Thyroid gland (tissue), 4 donors: ENCODE measurements at regions of chr10 and their contacts with region 1.

Region 1: GRCh38 chr10:123559066-123559822 is 106.9 kb upstream of the GPR26 start:
- DNase-seq: peak; percentile 59 to 68
- H3K4me3 ChIP-seq: no peak overlapping the region
- H3K27ac ChIP-seq: no peak overlapping the region
- H3K4me1 ChIP-seq: no peaks in the 10 kb centered on the region
- H3K27me3 ChIP-seq: no peaks in the 10 kb centered on the region
- CTCF ChIP-seq: peak; percentile 79 to 95 (median 92)
- POLR2A ChIP-seq: no peak

Region 2: GRCh38 chr10:123132576-123133477 is 426.4 kb before region 1 on chr10:
- intact Hi-C with region 1: loop called (anchors 5 kb)
- DNase-seq: peak; percentile 83 to 87
- H3K4me3 ChIP-seq: no peak overlapping the region
- H3K27ac ChIP-seq: no peak overlapping the region
- H3K4me1 ChIP-seq: peaks cover 35 to 53% of the 10 kb centered on the region in 2 donors
- H3K27me3 ChIP-seq: peaks cover 40% of the 10 kb centered on the region
- CTCF ChIP-seq: peak; percentile 75 to 94 (median 84)
- POLR2A ChIP-seq: no peak